ENCODE measurements at regions of chr5 and their contacts with region 1.

Region 1: DNA sequence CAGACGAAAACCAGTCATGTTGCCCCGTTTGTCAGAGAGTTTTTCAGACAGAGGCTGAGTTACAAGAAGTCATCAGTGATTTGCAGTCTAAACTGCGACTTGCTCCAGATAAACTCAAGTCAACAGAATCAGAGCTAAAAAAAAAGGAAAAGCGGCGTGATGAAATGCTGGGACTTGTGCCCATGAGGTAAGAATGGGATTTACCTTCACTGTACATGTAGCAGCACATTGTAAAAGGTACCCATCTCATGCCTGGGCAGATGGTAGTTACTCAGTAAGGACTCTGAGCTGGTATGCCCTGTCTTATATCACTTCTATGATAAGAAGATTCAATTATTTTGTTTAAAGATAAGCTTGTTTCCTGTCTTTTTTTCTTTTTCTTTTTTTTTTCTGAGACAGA is 38.8 kb downstream of the RAD50 start:
- DNase-seq: no peak
- H3K4me3 ChIP-seq: no peak overlapping the region
- H3K27ac ChIP-seq: no peak overlapping the region
- H3K4me1 ChIP-seq: no peaks in the 10 kb centered on the region
- H3K27me3 ChIP-seq: no peaks in the 10 kb centered on the region
- CTCF ChIP-seq: no peak
- POLR2A ChIP-seq: no peak

Region 2: GRCh38 chr5:132363431-132364112 is 232.1 kb before region 1 on chr5:
- intact Hi-C with region 1: no loop called
- DNase-seq: no peak
- H3K4me3 ChIP-seq: no peak overlapping the region
- H3K27ac ChIP-seq: no peak overlapping the region
- H3K4me1 ChIP-seq: no peaks in the 10 kb centered on the region
- H3K27me3 ChIP-seq: no peaks in the 10 kb centered on the region
- CTCF ChIP-seq: no peak
- POLR2A ChIP-seq: no peak

Region 3: DNA sequence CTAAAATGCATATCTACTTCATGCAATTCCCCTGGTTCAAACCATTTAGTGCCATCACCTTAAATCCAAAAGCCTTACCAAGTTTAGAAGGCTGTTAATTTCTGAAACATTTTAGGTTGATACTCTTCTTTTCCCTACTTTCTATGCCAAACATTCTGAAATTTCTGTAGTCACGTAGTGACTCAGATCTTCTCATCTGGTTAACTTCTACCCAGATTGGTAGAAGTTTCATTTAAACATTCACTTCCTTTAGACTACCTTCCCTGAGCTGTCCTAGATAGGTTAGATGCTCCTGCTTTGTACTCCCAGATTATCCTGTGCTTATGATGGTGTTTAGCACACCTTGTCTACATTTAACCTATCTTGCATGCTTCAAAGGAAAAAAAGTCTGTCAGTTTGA is 29.0 kb before region 1 on chr5:
- intact Hi-C with region 1: no loop called
- DNase-seq: no peak
- H3K4me3 ChIP-seq: no peak overlapping the region
- H3K27ac ChIP-seq: no peak overlapping the region
- H3K4me1 ChIP-seq: no peaks in the 10 kb centered on the region
- H3K27me3 ChIP-seq: no peaks in the 10 kb centered on the region
- CTCF ChIP-seq: no peak
- POLR2A ChIP-seq: no peak

Region 4: GRCh38 chr5:132736853-132737833 is 141.5 kb after region 1 on chr5 and contains the start of gene KIF3A:
- intact Hi-C with region 1: no loop called
- DNase-seq: peak; percentile 88 to 89
- H3K4me3 ChIP-seq: peak within 1 kb of the TSS; percentile 77 to 94 (median 84)
- H3K27ac ChIP-seq: peak within 1 kb of the TSS; percentile 81 to 86
- H3K4me1 ChIP-seq: no peaks in the 10 kb centered on the region
- H3K27me3 ChIP-seq: no peaks in the 10 kb centered on the region
- CTCF ChIP-seq: peak; percentile 9 to 35 (median 31)
- POLR2A ChIP-seq: no peak
- total RNA-seq, gene KIF3A: 4.5 to 15.7 (median 11.5) TPM

Region 5: GRCh38 chr5:133779828-133780475 is 1184.3 kb after region 1 on chr5:
- intact Hi-C with region 1: loop called (anchors 5 kb)
- DNase-seq: no peak
- H3K4me3 ChIP-seq: no peak overlapping the region
- H3K27ac ChIP-seq: no peak overlapping the region
- H3K4me1 ChIP-seq: no peaks in the 10 kb centered on the region
- H3K27me3 ChIP-seq: no peaks in the 10 kb centered on the region
- CTCF ChIP-seq: no peak
- POLR2A ChIP-seq: no peak

Measured in breast epithelium (tissue), 4 donors.